ENCODE measurements at regions of chr10 and their contacts with region 1.

Region 1: DNA sequence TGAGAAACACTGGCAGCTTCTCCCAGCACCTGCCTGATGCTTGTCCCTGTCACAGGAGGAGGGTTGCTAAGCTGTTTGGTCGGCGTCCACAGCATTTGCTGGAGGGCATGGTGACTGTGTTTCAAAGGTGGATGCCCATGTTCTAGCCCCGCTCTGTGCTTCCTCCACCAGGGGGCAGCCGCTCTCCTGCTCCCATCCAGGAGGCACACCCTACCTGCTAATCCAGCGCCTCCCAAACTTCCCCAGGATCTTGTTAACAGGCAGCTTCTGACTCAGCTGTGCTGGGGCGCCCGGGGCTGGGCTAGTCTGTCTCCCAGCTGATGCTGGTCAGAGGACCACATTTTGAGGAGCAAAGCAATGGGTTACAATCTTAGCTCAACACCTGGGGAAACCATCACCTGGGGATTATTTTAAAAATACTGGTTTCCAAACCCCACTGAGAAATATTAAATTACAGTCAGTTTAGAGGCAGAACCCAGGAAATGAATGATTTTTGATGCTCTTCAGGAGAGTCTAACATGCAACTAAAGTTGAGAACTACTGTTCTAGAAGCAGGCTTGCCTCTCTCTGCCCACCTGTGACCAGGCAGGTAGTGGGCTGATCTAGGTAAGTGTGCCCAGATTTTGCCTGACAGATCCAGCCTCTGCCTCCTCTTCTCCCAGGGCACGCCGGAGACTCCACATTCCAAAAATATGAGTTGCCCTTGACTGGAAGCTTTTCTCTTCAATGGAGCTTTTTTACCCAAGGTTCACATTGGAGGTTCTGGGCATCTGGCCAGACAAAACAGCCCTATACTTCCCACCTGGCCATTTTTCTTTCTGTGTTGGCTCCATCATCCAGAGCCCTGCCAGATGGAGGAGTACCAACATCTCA is 92.7 kb upstream of the GPR26 start:
- DNase-seq: peak in 5 of 9 donors; percentile 8 to 31 (median 12)
- ATAC-seq: peak; percentile 32
- H3K4me3 ChIP-seq: no peak overlapping the region
- H3K4me3 Mint-ChIP-seq: no peak overlapping the region
- H3K27ac ChIP-seq: no peak overlapping the region
- H3K27ac Mint-ChIP-seq: no peak overlapping the region
- H3K4me1 ChIP-seq: no peaks in the 10 kb centered on the region
- H3K4me1 Mint-ChIP-seq: peaks cover 0 to 4% (median 0%) of the 10 kb centered on the region in 7 donors
- H3K27me3 ChIP-seq: no peaks in the 10 kb centered on the region
- H3K27me3 Mint-ChIP-seq: peaks cover 0 to 54% (median 33%) of the 10 kb centered on the region in 5 donors

Region 2: DNA sequence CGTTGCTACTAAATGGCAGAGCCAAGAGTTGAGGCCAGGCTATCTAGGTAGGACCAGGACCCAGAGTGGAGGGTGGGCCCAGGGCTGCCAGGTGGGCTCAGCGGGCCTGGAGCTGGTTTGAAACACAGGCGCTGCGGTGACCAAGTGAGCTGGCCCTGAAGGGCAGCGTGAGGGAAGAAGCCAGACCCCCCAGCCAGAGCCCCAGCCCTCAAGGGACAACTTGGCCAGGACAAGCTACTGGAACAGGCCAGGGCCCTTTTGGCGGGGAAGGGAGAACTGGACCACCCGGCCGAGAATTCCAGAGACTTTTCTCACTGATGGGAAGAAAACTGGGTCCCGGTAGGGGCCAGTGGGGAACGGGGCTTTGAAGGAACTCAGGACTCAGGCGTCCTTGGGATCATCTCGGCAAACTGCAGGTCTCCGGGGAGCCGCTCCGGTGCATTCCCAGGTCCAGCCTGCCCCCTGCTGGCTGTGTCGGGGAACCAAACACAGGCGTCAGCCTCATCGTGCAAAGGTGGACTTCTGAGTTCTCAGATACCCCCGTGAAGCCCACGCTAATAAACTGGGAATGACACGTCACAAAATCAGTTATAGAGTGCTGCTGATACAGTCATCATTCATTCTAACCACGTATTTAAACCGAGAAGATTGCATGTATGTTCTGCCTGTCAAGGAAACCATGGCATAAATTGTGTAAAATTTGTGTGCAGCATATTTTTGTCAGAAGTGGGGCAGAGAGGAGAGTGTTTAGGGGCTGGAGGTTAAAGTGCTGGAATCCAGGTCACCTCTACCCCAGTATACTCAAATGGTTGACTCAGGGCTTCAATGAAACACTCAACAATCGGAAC is 394.1 kb after region 1 on chr10:
- CTCF ChIA-PET with region 1: no interaction called
- POLR2A ChIA-PET with region 1: no interaction called
- intact Hi-C with region 1: loop called in 1 of 2 experiments (anchors 2 kb)
- DNase-seq: peak in 6 of 9 donors; percentile 5 to 58 (median 22)
- ATAC-seq: peak; percentile 45
- H3K4me3 ChIP-seq: no peak overlapping the region
- H3K4me3 Mint-ChIP-seq: no peak overlapping the region
- H3K27ac ChIP-seq: no peak overlapping the region
- H3K27ac Mint-ChIP-seq: peak overlapping the region in 1 of 9 donors; percentile 16
- H3K4me1 ChIP-seq: no peaks in the 10 kb centered on the region
- H3K4me1 Mint-ChIP-seq: peaks cover 0 to 10% (median 0%) of the 10 kb centered on the region in 7 donors
- H3K27me3 ChIP-seq: peaks cover 0 to 14% of the 10 kb centered on the region in 2 donors
- H3K27me3 Mint-ChIP-seq: peaks cover 44 to 85% (median 70%) of the 10 kb centered on the region in 5 donors